ENCODE measurements at regions of chr7 and their contacts with region 1.

Region 1: GRCh38 chr7:23712368-23713284 is 2.6 kb downstream of the STK31 start:
- DNase-seq: no peak

Region 2: DNA sequence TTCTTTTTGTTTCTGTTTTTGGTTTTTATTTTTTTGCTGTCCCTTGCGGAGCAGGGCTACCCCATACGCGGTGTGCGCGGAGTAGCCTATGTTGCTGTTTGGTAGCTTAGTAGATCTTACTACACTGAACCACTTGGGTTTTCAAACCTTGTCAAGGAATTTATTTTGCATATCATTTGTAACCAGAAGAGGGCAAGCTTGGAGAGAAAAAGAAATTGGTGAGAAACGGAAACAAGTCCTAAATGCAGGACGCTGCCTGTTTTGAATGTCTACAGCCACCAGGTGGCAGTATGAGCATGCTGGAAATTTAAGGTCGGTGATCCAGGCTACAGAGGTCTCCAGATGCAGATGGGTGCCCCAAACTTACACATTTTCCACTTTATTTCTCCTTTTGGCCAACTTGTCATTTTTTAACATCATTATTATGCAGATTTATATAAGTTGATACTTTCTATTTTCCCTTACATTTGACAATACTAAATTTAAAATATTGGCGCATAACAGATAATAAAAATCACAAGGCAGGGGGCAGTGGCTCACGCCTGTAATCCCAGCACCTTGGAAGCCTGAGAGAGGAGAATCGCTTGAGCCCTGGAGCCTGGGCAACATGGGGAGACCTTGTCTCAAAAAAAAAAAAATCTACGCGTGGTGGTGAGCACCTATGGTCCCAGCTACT is 165.6 kb before region 1 on chr7:
- intact Hi-C with region 1: loop called (anchors 1 kb)
- DNase-seq: peak; percentile 51 to 95 (median 74)

Region 3: GRCh38 chr7:23570592-23571200 is 141.9 kb before region 1 on chr7:
- intact Hi-C with region 1: loop called (anchors 1 kb)
- DNase-seq: peak; percentile 21 to 96 (median 73)

Region 4: DNA sequence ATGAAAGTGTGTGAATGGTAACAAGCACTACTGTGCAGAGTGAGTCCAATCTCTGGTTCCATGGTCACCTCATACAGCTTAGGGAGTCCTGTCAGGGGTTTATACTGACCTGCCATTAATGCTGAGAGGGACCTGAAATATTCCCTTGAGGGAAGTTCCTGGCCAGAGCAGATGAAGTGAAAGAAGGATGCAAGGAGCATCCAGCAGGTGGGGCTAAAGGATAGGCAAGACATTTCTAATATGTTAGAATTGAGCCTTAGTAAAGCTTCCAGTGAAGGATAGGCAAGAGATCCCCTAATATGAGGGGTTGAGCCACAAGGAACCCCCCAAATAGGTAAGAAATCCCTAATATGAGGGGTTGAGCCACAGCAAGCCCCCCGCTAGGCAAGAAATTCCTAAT is 58.1 kb before region 1 on chr7:
- intact Hi-C with region 1: loop called (anchors 1 kb)
- DNase-seq: peak in 3 of 10 donors; percentile 11 to 44 (median 27)